PC-3 (cell line): ENCODE measurements at regions of chr4 and their contacts with region 1.

Region 1: GRCh38 chr4:145481164-145481941 is at the start of gene SMAD1:
- DNase-seq: peak; percentile 81
- ATAC-seq: peak; percentile 83
- H3K4me3 ChIP-seq: peak within 1 kb of the TSS; percentile 83
- H3K27ac ChIP-seq: peak within 1 kb of the TSS; percentile 26; the same call in 1 of the 2 replicates
- H3K4me1 ChIP-seq: peaks cover 23% of the 10 kb centered on the region; the same call in 1 of the 2 replicates
- H3K27me3 ChIP-seq: no peaks in the 10 kb centered on the region
- CTCF ChIP-seq: no peak
- total RNA-seq, gene SMAD1: 13.3 and 14.8 TPM in 2 replicates

Region 2: GRCh38 chr4:145234091-145234706 is 247.2 kb before region 1 on chr4:
- CTCF ChIA-PET with region 1: no interaction called
- POLR2A ChIA-PET with region 1: no interaction called
- intact Hi-C with region 1: loop called (anchors 1 kb)
- DNase-seq: peak; percentile 87
- ATAC-seq: peak; percentile 100
- H3K4me3 ChIP-seq: no peak overlapping the region
- H3K27ac ChIP-seq: no peak overlapping the region
- H3K4me1 ChIP-seq: 0 out of 2 replicates have a peak, but pooled peaks cover 5% of the 10 kb centered on the region
- H3K27me3 ChIP-seq: no peaks in the 10 kb centered on the region
- CTCF ChIP-seq: peak; percentile 98

Region 3: DNA sequence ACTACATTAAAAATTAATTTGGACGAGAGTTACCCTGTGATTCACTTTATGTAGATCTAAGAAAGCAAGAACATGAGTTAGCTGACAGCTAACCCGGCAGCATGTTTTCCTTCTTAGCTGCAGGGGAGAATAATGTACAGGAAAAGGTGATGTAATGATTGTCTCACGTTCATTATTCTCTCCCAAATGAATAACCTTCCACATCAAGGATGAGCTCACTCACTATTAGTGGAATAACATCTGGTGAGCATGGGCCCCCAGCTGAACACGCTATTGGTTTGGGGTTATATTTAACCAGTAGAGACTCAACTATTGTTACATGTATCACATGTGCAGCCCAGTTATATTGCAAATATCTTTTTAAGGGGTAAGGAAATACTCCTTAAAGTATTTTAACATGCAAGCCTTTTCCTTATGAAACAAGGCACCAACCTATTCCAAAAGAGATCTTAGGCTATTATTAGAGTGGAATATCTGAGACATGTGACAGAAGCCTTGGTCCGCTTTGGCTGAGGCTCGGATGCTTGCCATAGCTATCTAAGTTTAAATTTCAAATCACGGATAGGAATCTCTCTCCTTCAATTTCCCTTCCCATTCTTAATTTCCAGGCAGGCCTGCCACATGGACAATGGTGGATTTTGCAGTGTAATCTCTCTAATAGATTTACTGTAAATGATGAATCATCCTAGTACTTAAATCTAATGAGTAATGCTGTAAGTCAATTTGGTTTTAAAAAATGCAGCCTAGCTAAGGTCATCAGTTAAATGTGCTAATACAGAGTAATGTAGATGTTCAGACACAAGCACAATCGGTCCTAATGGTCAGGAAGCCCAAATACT is 202.0 kb before region 1 on chr4:
- CTCF ChIA-PET with region 1: no interaction called
- POLR2A ChIA-PET with region 1: no interaction called
- intact Hi-C with region 1: loop called (anchors 2 kb)
- DNase-seq: peak; percentile 77
- ATAC-seq: peak; percentile 84
- H3K4me3 ChIP-seq: no peak overlapping the region; the same call in 1 of the 2 replicates
- H3K27ac ChIP-seq: peak overlapping the region; percentile 82
- H3K4me1 ChIP-seq: peaks cover 24% of the 10 kb centered on the region
- H3K27me3 ChIP-seq: no peaks in the 10 kb centered on the region
- CTCF ChIP-seq: no peak

Region 4: GRCh38 chr4:145315811-145316225 is 165.5 kb before region 1 on chr4:
- CTCF ChIA-PET with region 1: no interaction called
- POLR2A ChIA-PET with region 1: no interaction called
- intact Hi-C with region 1: no loop called
- DNase-seq: no peak
- ATAC-seq: no peak
- H3K4me3 ChIP-seq: no peak overlapping the region
- H3K27ac ChIP-seq: no peak overlapping the region
- H3K4me1 ChIP-seq: peaks cover 7% of the 10 kb centered on the region; the same call in 1 of the 2 replicates
- H3K27me3 ChIP-seq: 0 out of 2 replicates have a peak, but pooled peaks cover 3% of the 10 kb centered on the region
- CTCF ChIP-seq: no peak

Region 5: DNA sequence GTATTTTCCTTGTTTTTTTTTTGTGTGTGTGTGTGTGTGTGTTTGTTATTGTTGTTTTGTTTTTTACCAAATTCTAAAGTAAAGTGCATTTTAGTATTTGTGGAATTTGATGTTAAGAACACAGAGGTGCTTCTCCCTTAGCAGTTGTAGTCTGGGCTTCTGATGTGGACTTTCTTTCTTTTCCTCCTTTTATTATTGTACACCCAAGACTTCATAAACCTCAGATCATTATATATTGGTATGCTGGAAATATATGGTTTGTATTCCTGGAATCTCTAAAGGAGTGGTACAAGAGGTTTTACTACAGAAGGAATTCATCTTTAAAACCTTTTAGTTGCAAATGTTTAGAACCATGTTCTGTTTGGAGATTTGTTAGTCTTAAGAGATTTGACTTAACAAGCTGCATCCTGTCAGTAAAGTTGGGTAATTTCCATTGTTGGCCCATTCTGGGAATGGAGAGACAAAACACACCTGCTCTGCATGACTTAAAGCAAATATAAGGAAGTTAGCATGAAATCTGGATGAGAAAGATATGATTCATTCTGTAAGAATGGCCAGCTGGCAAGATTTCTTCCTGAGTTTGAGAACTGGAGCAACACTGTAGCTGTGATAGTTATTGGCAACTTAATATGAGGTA is 64.3 kb after region 1 on chr4:
- CTCF ChIA-PET with region 1: no interaction called
- POLR2A ChIA-PET with region 1: no interaction called
- intact Hi-C with region 1: loop called (anchors 5 kb)
- DNase-seq: peak; percentile 97
- ATAC-seq: peak; percentile 95
- H3K4me3 ChIP-seq: peak overlapping the region; percentile 5; the same call in 1 of the 2 replicates
- H3K27ac ChIP-seq: peak overlapping the region; percentile 64
- H3K4me1 ChIP-seq: peaks cover 24% of the 10 kb centered on the region
- H3K27me3 ChIP-seq: no peaks in the 10 kb centered on the region
- CTCF ChIP-seq: no peak